ENCODE measurements at regions of chr3 and their contacts with region 1.

Region 1: GRCh38 chr3:24494618-24495325 is at the start of gene THRB:
- DNase-seq: peak; percentile 85
- ATAC-seq: peak; percentile 71
- total RNA-seq, gene THRB: 24.1 TPM

Region 2: DNA sequence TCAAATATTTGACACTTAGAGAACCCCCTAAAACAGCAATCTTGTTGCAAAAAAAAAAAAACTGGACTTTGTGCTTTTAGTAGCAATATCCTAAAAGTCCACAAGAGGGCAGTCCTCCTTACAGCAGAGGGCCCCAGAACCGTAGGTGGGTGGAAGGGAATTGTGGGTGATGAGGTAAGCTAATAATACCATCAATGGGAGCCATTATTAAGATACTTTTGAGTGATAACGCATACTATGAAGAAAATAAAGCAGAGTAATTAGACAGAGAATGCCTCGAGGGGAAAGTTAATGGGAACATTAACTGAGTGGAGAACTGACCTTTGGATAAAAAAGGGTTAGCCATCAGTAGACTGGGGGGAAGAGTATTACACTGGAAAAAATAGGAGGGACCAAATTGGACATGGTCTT is 230.0 kb before region 1 on chr3:
- intact Hi-C with region 1: loop called (anchors 10 kb)
- DNase-seq: no peak
- ATAC-seq: peak; percentile 67

Region 3: DNA sequence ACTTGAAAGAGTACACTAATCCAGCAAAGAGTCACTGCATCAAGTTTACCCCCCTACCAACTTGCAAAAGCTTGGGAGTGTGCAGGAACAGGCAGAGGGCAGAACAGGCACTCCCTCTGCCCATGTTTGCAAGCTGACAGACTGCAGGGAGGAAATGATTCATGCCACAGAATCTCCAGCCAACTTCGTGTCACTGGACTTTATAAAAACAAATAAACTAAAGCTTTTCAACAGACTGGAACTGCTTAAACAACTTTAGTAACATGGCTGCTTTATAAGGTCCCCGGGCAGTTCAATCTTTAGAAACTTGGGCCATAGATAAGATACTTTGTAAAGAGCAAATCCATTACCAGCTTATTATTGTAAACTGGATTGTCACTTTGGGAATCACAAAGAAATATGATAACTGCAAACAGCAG is 129.6 kb before region 1 on chr3:
- intact Hi-C with region 1: loop called (anchors 10 kb)
- DNase-seq: peak; percentile 36
- ATAC-seq: peak; percentile 86

Region 4: DNA sequence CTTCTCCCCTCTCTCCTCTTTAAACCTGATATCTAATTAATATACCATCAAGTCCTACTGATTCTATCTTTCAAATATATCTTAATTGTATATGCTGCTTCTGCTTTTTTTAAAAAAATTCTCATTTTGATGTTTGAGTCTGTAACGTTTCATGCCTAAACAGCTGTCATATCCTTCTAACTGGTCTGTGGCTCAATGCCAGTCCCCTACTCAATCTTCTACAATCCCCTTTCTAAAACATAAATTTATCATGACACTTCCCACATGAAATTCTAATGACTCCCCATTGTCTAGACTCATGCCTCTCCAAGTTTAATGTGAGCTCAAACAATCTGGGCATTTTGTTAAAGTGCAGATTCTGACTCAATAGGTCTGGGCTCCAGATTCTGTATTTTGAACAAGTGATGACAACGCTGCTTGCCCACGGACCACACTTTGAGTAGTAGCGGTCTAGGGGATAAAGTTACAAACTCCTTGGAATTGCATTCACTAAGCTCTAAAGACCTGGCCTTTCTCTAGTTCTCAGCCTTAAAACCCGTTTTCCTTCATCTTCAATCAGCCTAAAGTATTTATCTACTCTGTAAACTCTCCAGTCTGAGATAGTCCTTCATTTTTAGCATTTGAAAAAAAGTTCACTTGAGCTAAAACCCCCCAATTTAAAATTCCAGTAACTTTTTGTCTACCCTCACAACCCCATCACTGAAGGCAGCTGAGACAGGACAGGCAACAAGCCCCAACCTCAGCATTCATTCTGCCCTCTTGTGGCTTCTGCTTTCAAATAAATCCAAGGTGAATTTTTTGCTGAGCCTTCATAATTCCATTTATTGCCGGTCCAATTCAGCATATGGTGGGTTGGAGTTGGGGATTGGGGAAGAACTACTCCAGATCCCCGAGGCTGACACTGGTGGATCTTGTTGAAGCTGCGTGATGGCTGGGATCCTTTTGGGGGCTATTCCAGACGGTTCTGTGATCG is 87.9 kb after region 1 on chr3:
- intact Hi-C with region 1: loop called (anchors 10 kb)
- DNase-seq: no peak
- ATAC-seq: peak; percentile 81

Region 5: DNA sequence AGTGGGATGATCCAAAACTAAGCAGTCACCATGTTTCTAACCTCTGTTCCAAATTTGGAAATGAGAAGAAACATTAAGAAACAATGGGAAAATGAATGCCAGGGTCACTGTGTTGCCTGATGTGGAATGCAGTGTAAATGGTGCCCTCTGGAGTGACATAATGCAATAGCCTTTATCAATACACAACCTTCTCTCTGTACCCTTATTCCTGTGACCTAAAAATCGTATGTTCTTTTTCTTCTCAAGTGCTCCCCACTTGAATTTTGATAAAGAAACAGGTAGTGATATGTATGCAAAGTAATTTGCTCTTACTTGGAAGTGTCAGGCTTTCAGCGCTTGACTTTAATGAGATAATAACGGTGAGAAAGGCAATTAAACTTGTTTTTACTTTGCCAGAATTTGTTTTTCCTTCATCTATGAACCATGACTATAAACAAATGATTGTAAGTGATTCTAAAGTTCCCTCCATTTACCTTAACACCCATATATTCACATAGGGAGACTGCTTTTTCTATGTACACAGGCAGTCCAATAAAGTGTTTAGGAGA is 145.6 kb after region 1 on chr3:
- intact Hi-C with region 1: no loop called
- DNase-seq: no peak
- ATAC-seq: peak; percentile 77